H1 (cell line): ENCODE measurements at regions of chr9 and their contacts with region 1.

Region 1: GRCh38 chr9:8764051-8764450 is 964.5 kb upstream of the DMAC1 start:
- DNase-seq: no peak
- H3K4me3 ChIP-seq: no peak overlapping the region
- H3K27ac ChIP-seq: no peak overlapping the region
- H3K4me1 ChIP-seq: peaks cover 0 to 3% (median 0%) of the 10 kb centered on the region in 4 experiments; a peak in 1 of 7 replicates
- H3K27me3 ChIP-seq: no peaks in the 10 kb centered on the region
- CTCF ChIP-seq: no peak
- EP300 ChIP-seq: no peak
- POLR2A ChIP-seq: no peak
- RAD21 ChIP-seq: no peak

Region 2: DNA sequence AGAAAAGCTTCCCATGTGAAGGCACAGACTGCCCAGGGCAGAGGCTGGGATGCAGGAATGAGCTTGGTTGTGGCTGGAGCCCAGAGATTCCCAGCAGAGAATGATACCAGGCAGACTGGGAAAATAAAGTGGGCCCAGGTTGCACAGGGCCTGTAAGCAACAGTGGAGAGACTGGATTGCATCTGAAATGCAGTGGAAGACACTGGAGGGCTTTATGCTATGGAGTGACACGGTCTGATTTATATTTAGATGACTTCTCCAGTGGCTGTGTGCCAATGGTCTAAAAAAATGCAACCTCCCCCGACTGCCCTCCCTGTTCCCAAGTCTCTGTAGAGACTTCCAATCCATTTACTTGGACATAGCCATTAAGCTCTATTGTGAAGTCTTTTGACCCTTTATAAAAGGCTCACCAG is 13.4 kb before region 1 on chr9:
- CTCF ChIA-PET with region 1: interaction called, 11 read pairs
- POLR2A ChIA-PET with region 1: no interaction called
- DNase-seq: no peak
- H3K4me3 ChIP-seq: no peak overlapping the region
- H3K27ac ChIP-seq: no peak overlapping the region
- H3K4me1 ChIP-seq: peaks cover 8 to 12% (median 10%) of the 10 kb centered on the region in 4 experiments; a peak in 5 of 7 replicates
- H3K27me3 ChIP-seq: no peaks in the 10 kb centered on the region
- CTCF ChIP-seq: no peak
- EP300 ChIP-seq: no peak
- POLR2A ChIP-seq: no peak
- RAD21 ChIP-seq: no peak

Region 3: GRCh38 chr9:8784838-8785237 is 20.8 kb after region 1 on chr9:
- CTCF ChIA-PET with region 1: interaction called, 10 read pairs
- POLR2A ChIA-PET with region 1: no interaction called
- DNase-seq: no peak
- H3K4me3 ChIP-seq: no peak overlapping the region
- H3K27ac ChIP-seq: no peak overlapping the region
- H3K4me1 ChIP-seq: no peaks in the 10 kb centered on the region
- H3K27me3 ChIP-seq: no peaks in the 10 kb centered on the region
- CTCF ChIP-seq: no peak
- EP300 ChIP-seq: no peak
- POLR2A ChIP-seq: no peak
- RAD21 ChIP-seq: no peak